Left cardiac atrium (tissue), 4 donors: ENCODE measurements at regions of chr6 and their contacts with region 1.

Region 1: GRCh38 chr6:4358414-4359114 is 223.2 kb upstream of the ECI2 start:
- DNase-seq: peak; percentile 95
- ATAC-seq: peak; percentile 96 to 97

Region 2: DNA sequence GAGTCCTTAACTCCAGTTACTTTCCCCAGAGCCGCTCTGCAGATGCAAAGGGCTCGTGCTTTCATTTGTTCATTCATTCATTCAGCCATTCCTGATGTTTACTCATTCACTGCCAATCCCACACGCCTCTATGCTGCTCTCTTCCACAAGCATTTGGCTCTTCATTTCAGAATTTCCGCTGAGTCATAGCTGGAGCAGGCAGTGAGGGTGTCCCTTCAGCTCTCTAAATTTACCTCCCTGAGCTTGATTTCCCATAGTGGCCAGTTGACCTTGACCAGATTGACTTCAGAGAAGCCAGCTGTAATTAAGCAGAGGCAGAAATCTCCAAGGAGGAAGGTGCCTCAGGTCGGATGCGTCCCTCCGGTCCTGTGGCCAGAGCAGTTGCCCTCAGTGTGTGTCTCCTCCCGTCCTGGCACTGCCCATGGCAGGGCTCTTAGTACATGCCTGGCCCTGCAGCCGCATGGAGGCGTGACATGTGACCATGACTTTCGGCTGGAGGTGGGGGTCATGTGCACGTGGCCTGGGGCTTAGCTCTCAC is 43.9 kb after region 1 on chr6:
- intact Hi-C with region 1: loop called in 1 of 2 experiments (anchors 5 kb)
- DNase-seq: peak; percentile 39
- ATAC-seq: peak; percentile 84 to 88